Gastrocnemius medialis (tissue), 4 donors: ENCODE measurements at regions of chr1 and their contacts with region 1.

Region 1: GRCh38 chr1:37890378-37891014 is 31.1 kb upstream of the MTF1 start:
- DNase-seq: no peak
- ATAC-seq: peak; percentile 53 to 70
- H3K4me3 ChIP-seq: no peak overlapping the region
- H3K27ac ChIP-seq: peak overlapping the region in 2 of 4 donors; percentile 6 to 35
- H3K4me1 ChIP-seq: peaks cover 0 to 4% of the 10 kb centered on the region in 2 donors
- H3K27me3 ChIP-seq: no peaks in the 10 kb centered on the region
- CTCF ChIP-seq: peak; percentile 43 to 60 (median 47)
- POLR2A ChIP-seq: no peak

Region 2: DNA sequence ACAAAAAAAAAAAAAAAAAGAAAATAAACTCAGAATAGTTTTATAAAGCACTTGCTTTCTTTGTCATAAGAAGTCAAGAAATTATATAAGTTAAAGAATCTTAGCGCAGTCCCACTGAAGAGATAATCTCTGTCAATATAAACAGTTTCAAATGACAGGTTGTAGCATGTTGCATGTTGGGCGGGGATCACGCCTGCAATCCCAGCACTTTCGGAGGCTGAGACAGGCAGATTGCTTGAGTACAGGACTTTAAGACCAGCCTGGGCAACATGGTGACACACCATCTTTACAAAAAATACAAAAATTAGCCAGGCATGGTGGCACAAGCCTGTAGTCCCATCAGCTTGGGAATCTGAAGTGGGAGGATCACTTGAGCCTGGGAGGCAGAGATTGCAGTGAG is 74.8 kb after region 1 on chr1:
- in situ Hi-C with region 1: no loop called
- intact Hi-C with region 1: loop called (anchors 5 kb)
- DNase-seq: no peak
- ATAC-seq: no peak
- H3K4me3 ChIP-seq: no peak overlapping the region
- H3K27ac ChIP-seq: peak overlapping the region in 1 of 4 donors; percentile 6
- H3K4me1 ChIP-seq: no peaks in the 10 kb centered on the region
- H3K27me3 ChIP-seq: no peaks in the 10 kb centered on the region
- CTCF ChIP-seq: no peak
- POLR2A ChIP-seq: no peak

Region 3: GRCh38 chr1:37978541-37978940 is 88.0 kb after region 1 on chr1:
- in situ Hi-C with region 1: no loop called
- intact Hi-C with region 1: loop called (anchors 5 kb)
- DNase-seq: no peak
- ATAC-seq: peak in 1 of 2 donors; percentile 30
- H3K4me3 ChIP-seq: no peak overlapping the region
- H3K27ac ChIP-seq: peak overlapping the region in 3 of 4 donors; percentile 9 to 51 (median 9)
- H3K4me1 ChIP-seq: no peaks in the 10 kb centered on the region
- H3K27me3 ChIP-seq: no peaks in the 10 kb centered on the region
- CTCF ChIP-seq: no peak
- POLR2A ChIP-seq: no peak

Region 4: GRCh38 chr1:37994886-37995566 is 104.5 kb after region 1 on chr1:
- in situ Hi-C with region 1: no loop called
- intact Hi-C with region 1: loop called (anchors 5 kb)
- DNase-seq: no peak
- ATAC-seq: no peak
- H3K4me3 ChIP-seq: peak overlapping the region in 1 of 4 donors; percentile 37
- H3K27ac ChIP-seq: peak overlapping the region; percentile 94 to 100 (median 98)
- H3K4me1 ChIP-seq: peaks cover 31 to 51% of the 10 kb centered on the region in 2 donors
- H3K27me3 ChIP-seq: no peaks in the 10 kb centered on the region
- CTCF ChIP-seq: no peak
- POLR2A ChIP-seq: no peak

Region 5: GRCh38 chr1:38173157-38173831 is 282.8 kb after region 1 on chr1:
- in situ Hi-C with region 1: no loop called
- intact Hi-C with region 1: no loop called
- DNase-seq: no peak
- ATAC-seq: no peak
- H3K4me3 ChIP-seq: no peak overlapping the region
- H3K27ac ChIP-seq: no peak overlapping the region
- H3K4me1 ChIP-seq: no peaks in the 10 kb centered on the region
- H3K27me3 ChIP-seq: no peaks in the 10 kb centered on the region
- CTCF ChIP-seq: no peak
- POLR2A ChIP-seq: no peak